Breast epithelium (tissue), 4 donors: ENCODE measurements at regions of chr4 and their contacts with region 1.

Region 1: DNA sequence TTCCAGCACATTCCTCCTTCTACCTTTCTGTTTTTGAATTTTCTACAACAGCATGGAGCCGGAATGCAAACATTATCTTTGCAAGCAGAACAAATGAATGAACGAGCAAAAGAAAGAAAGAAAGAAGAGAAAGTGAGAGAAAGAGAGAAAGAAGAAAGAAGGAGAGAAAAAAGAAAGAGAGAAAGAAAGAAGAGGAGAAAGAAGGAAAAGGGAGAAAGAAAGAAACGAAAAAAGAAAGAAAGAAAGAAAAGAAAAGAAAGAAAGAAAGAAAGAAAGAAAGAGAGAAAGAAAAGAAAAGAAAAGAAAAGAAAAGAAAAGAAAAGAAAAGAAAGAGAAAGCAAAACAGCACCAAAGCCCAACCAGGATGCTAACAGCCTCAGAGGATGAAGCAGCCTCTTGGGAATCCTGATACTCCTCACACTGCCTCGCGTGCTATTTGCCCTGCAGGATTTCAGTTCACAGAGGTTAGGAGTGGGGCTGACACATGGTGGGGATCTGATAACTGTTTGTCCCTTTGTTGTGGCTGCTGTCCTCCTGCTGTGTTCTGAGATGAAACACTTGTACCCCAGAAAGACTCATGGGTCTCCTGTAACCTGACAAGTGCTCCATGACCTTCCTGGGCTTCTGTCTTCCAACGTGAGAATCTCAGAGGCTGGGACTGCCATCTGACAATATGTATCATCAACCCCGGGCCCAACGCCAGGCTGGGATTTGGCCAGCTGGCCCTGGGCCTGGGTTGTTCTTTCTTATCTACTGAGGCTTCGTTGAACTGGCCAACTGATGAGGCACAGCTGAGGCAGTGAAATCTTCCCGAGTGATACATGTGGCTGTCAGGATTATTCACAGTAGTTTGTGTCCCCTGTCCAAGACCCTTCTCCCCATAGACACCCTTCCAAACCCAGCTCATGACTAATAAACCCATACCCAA is 61.0 kb downstream of the SEPSECS start:
- DNase-seq: no peak
- H3K4me3 ChIP-seq: no peak overlapping the region
- H3K27ac ChIP-seq: no peak overlapping the region
- H3K4me1 ChIP-seq: no peaks in the 10 kb centered on the region
- H3K27me3 ChIP-seq: no peaks in the 10 kb centered on the region
- CTCF ChIP-seq: no peak
- POLR2A ChIP-seq: no peak

Region 2: GRCh38 chr4:24630937-24631336 is 468.3 kb before region 1 on chr4:
- intact Hi-C with region 1: no loop called
- DNase-seq: no peak
- H3K4me3 ChIP-seq: no peak overlapping the region
- H3K27ac ChIP-seq: no peak overlapping the region
- H3K4me1 ChIP-seq: no peaks in the 10 kb centered on the region
- H3K27me3 ChIP-seq: no peaks in the 10 kb centered on the region
- CTCF ChIP-seq: no peak
- POLR2A ChIP-seq: no peak

Region 3: GRCh38 chr4:26860157-26860921 is 1761.1 kb after region 1 on chr4 and contains the start of gene STIM2:
- intact Hi-C with region 1: loop called (anchors 10 kb)
- DNase-seq: peak; percentile 93 to 94
- H3K4me3 ChIP-seq: peak within 1 kb of the TSS; percentile 73 to 96 (median 87)
- H3K27ac ChIP-seq: peak within 1 kb of the TSS; percentile 92 to 96
- H3K4me1 ChIP-seq: peaks cover 0 to 13% of the 10 kb centered on the region in 2 donors
- H3K27me3 ChIP-seq: no peaks in the 10 kb centered on the region
- CTCF ChIP-seq: peak; percentile 44 to 59 (median 49)
- POLR2A ChIP-seq: peak; percentile 45
- total RNA-seq, gene STIM2: 12.0 to 24.7 (median 23.3) TPM